ENCODE measurements at regions of chr18 and their contacts with region 1.

Region 1: GRCh38 chr18:61551586-61551985 is 218.4 kb downstream of the CDH20 start:
- DNase-seq: peak; percentile 52
- H3K4me3 ChIP-seq: no peak overlapping the region
- H3K27me3 ChIP-seq: no peaks in the 10 kb centered on the region; the same call in 1 of the 2 replicates
- CTCF ChIP-seq: peak; percentile 91

Region 2: GRCh38 chr18:61901323-61901986 is 349.9 kb after region 1 on chr18:
- CTCF ChIA-PET with region 1: interaction called, 13 read pairs
- POLR2A ChIA-PET with region 1: no interaction called
- DNase-seq: no peak
- H3K4me3 ChIP-seq: no peak overlapping the region
- H3K27me3 ChIP-seq: no peaks in the 10 kb centered on the region
- CTCF ChIP-seq: peak; percentile 98

Region 3: DNA sequence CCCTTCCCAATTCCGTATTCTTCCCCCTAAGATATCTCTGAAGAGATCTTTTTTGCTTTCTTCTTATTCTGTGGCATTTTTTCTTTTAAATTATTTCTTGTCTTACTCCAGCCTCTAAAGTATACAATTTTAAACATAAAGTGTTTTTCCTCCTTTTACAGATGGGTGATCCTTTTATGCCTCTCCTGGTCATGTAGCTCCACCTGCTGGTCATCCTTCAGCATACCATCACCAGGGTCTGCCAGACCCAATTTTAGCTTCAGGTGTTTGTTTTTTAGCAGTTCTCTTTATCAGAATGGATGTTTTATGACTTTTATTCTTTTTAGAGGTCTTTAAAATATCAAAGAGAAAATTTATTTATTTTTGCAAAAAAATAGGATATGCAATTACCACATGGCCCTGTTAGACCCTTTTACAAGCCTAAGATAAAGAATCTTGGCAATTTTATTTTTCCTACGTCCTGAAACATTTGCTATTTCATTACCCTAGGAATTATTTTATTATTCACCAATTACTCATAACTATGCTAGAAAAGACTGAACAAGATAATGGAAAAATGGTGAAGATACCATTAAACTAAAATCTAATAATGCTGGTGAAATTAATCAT is 579.8 kb after region 1 on chr18:
- CTCF ChIA-PET with region 1: interaction called, 12 read pairs
- POLR2A ChIA-PET with region 1: no interaction called
- DNase-seq: peak; percentile 4
- H3K4me3 ChIP-seq: no peak overlapping the region
- H3K27me3 ChIP-seq: no peaks in the 10 kb centered on the region
- CTCF ChIP-seq: peak; percentile 90

Measured in BJ (cell line).